SK-N-SH (cell line): ENCODE measurements at regions of chr1 and their contacts with region 1.

Region 1: DNA sequence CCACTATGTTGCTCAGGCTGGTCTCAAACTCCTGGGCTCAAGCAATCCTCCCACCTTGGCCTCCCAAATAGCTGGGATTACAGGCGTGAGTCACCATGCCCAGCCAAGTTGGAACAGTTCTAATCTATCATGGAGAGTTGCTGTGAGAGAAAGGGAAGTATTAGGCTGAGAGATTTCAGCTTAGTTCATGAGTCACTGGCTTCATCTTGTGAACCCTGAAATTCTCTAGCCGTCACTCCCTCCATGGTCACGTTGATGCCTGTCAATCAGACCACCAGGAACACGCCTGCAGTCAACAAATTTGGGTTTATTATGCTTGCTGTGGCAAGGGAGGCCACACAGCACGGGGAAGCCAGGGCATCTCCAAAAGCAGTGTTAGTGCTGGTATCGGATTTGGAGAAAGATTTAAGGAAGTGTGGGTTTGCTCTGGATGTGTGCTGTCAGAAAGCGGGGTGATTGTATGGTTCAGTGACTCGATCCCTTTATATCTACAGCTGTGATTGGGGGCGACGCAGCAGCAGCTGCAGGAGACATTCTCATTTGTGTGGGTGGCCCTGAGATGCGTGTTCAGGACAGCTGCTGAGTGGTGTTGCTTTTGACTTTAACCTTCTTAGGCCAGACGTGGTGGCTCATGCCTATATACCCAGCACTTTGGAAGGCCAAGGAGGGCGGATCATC is 18.7 kb downstream of the UQCRHL start:
- DNase-seq: no peak
- H3K4me3 ChIP-seq: no peak overlapping the region
- H3K27ac ChIP-seq: peak overlapping the region in 1 of 2 experiments; percentile 48; a peak in 1 of 4 replicates
- H3K4me1 ChIP-seq: peaks cover 0 to 2% of the 10 kb centered on the region in 2 experiments; a peak in 1 of 4 replicates
- H3K27me3 ChIP-seq: no peaks in the 10 kb centered on the region
- CTCF ChIP-seq: no peak
- EP300 ChIP-seq: no peak
- RAD21 ChIP-seq: no peak

Region 2: DNA sequence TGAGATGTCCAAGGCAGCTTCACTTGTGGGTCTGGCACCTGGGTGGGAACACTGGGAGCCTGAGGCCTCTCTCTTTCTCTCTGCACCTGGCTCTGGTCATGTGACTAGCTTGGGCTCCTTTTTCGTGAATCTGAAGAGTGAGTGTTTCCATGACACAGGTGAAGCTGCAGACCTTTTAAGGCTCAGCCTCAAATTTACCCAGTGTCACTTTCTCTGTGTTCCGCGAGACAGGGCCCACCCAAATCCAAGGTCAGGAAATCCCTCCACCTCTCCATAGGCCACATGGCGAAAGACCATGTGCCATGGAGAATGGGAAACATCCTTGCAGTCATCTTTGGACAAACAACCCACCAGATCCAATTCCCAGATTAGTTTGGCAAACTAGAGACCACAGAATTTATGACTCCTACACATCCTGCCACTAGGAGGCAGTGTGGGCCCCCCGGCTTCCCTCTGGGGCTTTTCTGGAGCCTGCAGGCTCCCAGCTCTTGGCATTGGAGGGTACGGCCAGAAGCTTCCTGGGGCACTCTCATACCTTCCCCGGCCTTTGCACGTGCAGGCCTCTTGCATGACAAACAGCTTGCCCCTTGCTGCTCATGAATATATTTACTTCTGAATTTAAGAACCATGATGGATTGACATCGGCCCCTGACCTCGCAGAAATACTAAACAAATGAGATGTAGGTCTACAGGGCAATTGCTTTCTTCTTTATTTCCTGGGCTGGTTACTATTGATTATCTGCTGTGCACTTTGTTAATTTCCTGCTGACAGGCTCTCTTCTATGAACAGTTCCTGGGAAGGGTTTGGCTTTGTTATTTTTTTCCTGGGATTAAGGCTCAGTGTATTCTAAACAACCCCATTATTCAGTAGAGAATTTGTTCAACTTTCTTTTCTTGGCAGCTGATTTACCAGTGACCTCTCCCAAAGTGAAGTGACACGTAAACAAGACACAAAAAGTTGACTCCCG is 1009.6 kb before region 1 on chr1:
- CTCF ChIA-PET with region 1: no interaction called
- POLR2A ChIA-PET with region 1: no interaction called
- DNase-seq: peak; percentile 55
- H3K4me3 ChIP-seq: no peak overlapping the region; a peak in 1 of 4 replicates
- H3K27ac ChIP-seq: no peak overlapping the region
- H3K4me1 ChIP-seq: peaks cover 0 to 2% of the 10 kb centered on the region in 2 experiments; a peak in 1 of 4 replicates
- H3K27me3 ChIP-seq: no peaks in the 10 kb centered on the region
- CTCF ChIP-seq: peak; percentile 67
- EP300 ChIP-seq: no peak
- RAD21 ChIP-seq: peak; percentile 53

Region 3: GRCh38 chr1:15650433-15650832 is 138.3 kb before region 1 on chr1:
- CTCF ChIA-PET with region 1: no interaction called
- POLR2A ChIA-PET with region 1: no interaction called
- DNase-seq: no peak
- H3K4me3 ChIP-seq: no peak overlapping the region
- H3K27ac ChIP-seq: no peak overlapping the region
- H3K4me1 ChIP-seq: no peaks in the 10 kb centered on the region
- H3K27me3 ChIP-seq: no peaks in the 10 kb centered on the region
- CTCF ChIP-seq: no peak
- EP300 ChIP-seq: no peak
- RAD21 ChIP-seq: no peak

Region 4: DNA sequence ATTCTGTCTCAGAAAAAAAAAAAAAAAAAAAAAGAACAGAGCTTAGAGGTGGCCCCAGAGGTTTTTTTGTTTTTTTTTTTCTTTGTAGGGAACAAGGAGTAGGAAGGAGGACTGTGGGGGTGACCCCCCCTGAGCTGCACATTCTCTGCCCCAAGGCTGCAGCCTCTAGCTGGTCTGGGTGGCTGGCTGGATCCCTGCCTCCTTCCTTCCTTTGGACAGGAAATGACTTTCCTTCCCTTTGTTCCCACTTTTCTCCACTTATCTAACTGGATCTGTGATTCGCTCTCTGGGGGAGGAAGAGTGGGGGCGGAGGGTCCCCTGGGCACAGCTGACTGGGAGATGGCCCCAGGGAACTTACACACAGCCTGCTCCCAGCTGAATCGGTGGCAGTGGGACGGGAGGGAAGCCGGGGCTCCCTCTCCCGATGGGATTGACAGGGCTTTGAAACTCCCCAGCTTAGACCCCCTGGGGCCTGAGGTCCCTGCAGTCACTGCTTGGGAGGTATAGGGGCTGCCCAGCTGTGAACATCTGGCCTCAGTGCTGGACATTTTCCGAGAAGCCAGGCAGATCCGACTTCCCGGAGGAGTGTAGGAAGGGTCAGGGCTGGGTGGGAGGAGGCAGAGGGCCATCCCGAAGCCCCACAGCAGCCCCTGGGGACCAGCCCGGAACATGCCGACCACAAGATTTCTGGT is 28.1 kb before region 1 on chr1:
- CTCF ChIA-PET with region 1: interaction called, 18 read pairs
- POLR2A ChIA-PET with region 1: no interaction called
- DNase-seq: peak; percentile 82
- H3K4me3 ChIP-seq: peak overlapping the region; percentile 40 to 82
- H3K27ac ChIP-seq: peak overlapping the region; percentile 70 to 84
- H3K4me1 ChIP-seq: peaks cover 28 to 44% of the 10 kb centered on the region in 2 experiments
- H3K27me3 ChIP-seq: no peaks in the 10 kb centered on the region
- CTCF ChIP-seq: no peak
- EP300 ChIP-seq: peak in 1 of 2 experiments; percentile 22; a peak in 1 of 4 replicates
- RAD21 ChIP-seq: peak; percentile 34; the same call in 1 of the 2 replicates

Region 5: DNA sequence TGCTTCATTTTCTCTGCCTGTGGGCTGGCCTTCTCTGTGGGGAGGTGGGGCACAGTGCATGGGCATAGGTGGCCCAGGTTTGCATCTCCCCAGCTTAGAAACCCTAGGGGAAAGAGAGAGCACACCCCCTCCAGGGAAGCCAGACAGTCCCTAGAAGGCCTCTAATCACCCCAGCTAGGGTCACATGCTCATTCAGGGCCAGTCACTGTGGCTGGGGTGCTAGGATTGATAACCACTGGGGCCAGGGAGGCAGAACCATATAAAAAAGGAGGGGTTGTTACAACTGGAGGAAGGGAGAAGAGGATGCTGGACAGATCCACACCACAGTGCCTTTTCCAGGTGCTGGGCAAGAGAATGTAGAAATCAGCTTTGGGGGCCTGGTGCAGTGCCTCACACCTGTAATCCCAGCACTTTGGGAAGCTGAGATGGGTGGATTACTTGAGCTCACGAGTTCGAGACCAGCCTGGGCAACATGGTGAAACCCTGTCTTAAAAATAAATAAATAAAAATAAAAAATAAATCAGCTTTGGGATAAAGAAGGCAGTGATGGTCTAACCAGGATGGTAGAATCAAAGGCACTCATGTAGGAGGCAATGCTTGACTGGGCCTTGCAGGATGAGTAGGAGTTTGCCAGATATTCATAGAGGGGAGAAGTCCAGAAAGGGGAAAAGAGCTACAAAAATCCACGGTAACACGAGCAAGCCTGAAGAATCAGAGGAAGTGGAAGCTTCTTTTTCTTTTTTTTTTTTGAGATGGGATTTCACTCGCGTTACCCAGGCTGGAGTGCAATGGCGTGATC is 10.7 kb before region 1 on chr1:
- CTCF ChIA-PET with region 1: interaction called, 21 read pairs
- POLR2A ChIA-PET with region 1: no interaction called
- DNase-seq: no peak
- H3K4me3 ChIP-seq: no peak overlapping the region
- H3K27ac ChIP-seq: no peak overlapping the region
- H3K4me1 ChIP-seq: no peaks in the 10 kb centered on the region
- H3K27me3 ChIP-seq: no peaks in the 10 kb centered on the region
- CTCF ChIP-seq: no peak
- EP300 ChIP-seq: no peak
- RAD21 ChIP-seq: no peak

Region 6: DNA sequence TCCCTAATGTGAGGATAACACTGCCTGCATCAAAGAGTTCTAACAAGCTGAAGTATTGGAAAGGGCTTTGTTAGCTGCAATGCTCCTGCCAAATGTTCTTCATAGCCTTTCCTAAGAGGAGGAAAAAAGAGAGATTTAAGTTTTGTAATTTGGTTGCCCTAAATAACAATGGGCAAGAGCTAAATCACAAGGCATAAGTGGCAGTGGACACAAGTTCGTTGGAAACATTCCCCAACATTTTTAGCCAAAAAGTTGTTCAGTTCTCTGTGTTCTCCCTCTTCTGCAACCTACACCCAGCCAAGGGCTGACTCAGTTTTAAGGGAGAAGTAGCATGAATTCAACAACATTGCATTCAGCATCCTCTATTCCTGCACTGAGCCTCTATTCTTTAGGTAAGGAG is 21.3 kb after region 1 on chr1:
- CTCF ChIA-PET with region 1: interaction called, 17 read pairs
- POLR2A ChIA-PET with region 1: no interaction called
- DNase-seq: no peak
- H3K4me3 ChIP-seq: no peak overlapping the region
- H3K27ac ChIP-seq: no peak overlapping the region
- H3K4me1 ChIP-seq: no peaks in the 10 kb centered on the region
- H3K27me3 ChIP-seq: no peaks in the 10 kb centered on the region
- CTCF ChIP-seq: no peak
- EP300 ChIP-seq: no peak
- RAD21 ChIP-seq: no peak

Region 7: DNA sequence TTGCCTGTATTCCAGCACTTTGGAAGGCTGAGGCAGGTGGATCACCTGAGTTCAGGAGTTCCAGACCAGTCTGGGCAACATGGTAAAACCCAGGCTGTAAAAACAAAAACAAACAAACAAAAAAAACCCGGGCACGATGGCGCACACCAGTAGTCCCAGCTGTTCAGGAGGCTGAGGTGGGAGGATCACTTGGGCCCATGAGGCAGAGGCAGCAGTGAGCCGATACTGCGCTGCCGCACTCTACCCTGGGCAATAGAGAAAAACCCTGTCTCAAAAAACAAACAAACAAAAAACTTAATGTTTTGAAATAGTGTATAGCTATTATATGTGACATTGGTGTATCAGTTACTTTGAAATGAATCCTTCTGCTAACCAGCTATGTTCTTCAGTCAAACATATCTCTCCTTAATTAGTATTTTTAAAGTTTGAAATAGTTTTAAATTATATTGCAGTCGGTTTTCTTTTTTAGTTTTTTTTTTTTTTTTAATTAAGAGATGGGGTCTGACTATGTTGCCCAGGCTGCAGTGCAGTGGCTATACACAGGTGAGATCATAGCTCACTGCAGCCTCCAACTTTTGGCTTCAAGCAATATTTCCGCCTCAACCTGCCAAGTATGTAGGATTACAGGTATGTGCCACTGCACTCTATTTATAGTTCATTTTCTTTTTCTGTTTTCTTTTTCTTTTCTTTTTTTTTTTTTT is 70.1 kb after region 1 on chr1:
- CTCF ChIA-PET with region 1: no interaction called
- POLR2A ChIA-PET with region 1: no interaction called
- DNase-seq: no peak
- H3K4me3 ChIP-seq: no peak overlapping the region
- H3K27ac ChIP-seq: no peak overlapping the region
- H3K4me1 ChIP-seq: no peaks in the 10 kb centered on the region; a peak in 1 of 4 replicates
- H3K27me3 ChIP-seq: no peaks in the 10 kb centered on the region
- CTCF ChIP-seq: no peak
- EP300 ChIP-seq: no peak
- RAD21 ChIP-seq: no peak

Region 8: DNA sequence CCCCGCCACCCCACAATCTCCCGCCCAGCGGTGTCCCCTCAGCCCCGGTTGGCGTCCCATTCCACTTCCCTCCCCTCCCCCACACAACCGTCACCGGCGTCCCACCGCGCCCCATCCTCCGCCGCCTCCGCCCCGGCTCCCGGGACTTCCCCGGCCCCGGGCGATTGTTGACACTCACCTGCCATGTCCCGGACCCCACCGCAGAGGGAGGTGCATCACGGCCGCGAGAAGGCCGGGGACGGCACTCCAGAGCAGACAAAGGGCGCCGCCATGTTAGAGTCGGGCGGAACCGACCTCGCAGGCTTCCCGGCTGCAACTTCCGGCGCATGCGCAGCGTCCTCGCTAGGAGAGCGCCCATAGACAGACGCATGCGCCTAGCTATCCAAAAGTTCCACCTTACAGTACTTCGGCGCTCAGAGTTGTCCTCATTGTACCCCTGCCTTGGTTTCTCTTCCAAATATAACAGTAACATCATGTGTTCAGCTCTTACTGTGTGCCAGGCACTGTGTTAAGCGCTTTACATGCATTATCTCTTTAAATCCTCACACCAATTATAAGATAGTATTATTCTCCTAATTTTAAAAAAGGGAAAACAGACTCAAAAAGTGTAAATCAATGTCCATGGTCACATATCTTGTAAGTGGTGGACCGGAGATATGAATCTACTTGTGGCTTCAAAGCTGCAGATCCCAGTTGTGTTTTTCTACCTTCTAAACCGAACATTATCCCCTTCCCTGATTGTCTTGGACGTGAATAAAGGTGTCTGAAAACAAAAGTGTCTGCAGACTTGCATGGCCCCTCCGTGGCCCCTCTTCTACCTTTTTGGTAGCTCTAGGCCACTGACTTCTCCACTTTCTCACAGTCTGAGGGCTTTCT is 187.3 kb after region 1 on chr1 and contains the start of gene ZBTB17:
- CTCF ChIA-PET with region 1: interaction called, 13 read pairs
- POLR2A ChIA-PET with region 1: no interaction called
- DNase-seq: peak; percentile 97
- H3K4me3 ChIP-seq: peak within 1 kb of the TSS; percentile 73 to 80
- H3K27ac ChIP-seq: peak within 1 kb of the TSS; percentile 72 to 83
- H3K4me1 ChIP-seq: peaks cover 6% of the 10 kb centered on the region in 2 experiments; a peak in 3 of 4 replicates
- H3K27me3 ChIP-seq: no peaks in the 10 kb centered on the region
- CTCF ChIP-seq: no peak
- EP300 ChIP-seq: no peak
- RAD21 ChIP-seq: no peak
- polyA plus RNA-seq, gene ZBTB17: 54.1 and 56.4 TPM in 2 replicates

Region 9: GRCh38 chr1:16009030-16009709 is 220.4 kb after region 1 on chr1:
- CTCF ChIA-PET with region 1: interaction called, 19 read pairs
- POLR2A ChIA-PET with region 1: no interaction called
- DNase-seq: peak; percentile 91
- H3K4me3 ChIP-seq: no peak overlapping the region; a peak in 1 of 4 replicates
- H3K27ac ChIP-seq: no peak overlapping the region
- H3K4me1 ChIP-seq: peaks cover 0 to 6% of the 10 kb centered on the region in 2 experiments; a peak in 1 of 4 replicates
- H3K27me3 ChIP-seq: no peaks in the 10 kb centered on the region
- CTCF ChIP-seq: peak; percentile 97
- EP300 ChIP-seq: no peak
- RAD21 ChIP-seq: peak; percentile 98

Region 10: GRCh38 chr1:16217061-16217785 is 428.5 kb after region 1 on chr1:
- CTCF ChIA-PET with region 1: no interaction called
- POLR2A ChIA-PET with region 1: no interaction called
- DNase-seq: peak; percentile 99
- H3K4me3 ChIP-seq: peak overlapping the region; percentile 57 to 65
- H3K27ac ChIP-seq: peak overlapping the region; percentile 33 to 84; a peak in 3 of 4 replicates
- H3K4me1 ChIP-seq: peaks cover 0 to 22% of the 10 kb centered on the region in 2 experiments; a peak in 2 of 4 replicates
- H3K27me3 ChIP-seq: no peaks in the 10 kb centered on the region
- CTCF ChIP-seq: no peak
- EP300 ChIP-seq: no peak
- RAD21 ChIP-seq: no peak